ENCODE measurements at regions of chr18 and their contacts with region 1.

Region 1: GRCh38 chr18:21194871-21195771 is 46.9 kb upstream of the GREB1L start:
- DNase-seq: peak in 2 of 5 donors; percentile 7 to 13
- H3K4me3 ChIP-seq: no peak overlapping the region
- H3K4me3 Mint-ChIP-seq: no peak overlapping the region
- H3K27ac ChIP-seq: no peak overlapping the region
- H3K27ac Mint-ChIP-seq: no peak overlapping the region
- H3K4me1 ChIP-seq: no peaks in the 10 kb centered on the region
- H3K4me1 Mint-ChIP-seq: no peaks in the 10 kb centered on the region
- H3K27me3 ChIP-seq: no peaks in the 10 kb centered on the region
- H3K27me3 Mint-ChIP-seq: peaks cover 2 to 26% of the 10 kb centered on the region in 2 donors

Region 2: DNA sequence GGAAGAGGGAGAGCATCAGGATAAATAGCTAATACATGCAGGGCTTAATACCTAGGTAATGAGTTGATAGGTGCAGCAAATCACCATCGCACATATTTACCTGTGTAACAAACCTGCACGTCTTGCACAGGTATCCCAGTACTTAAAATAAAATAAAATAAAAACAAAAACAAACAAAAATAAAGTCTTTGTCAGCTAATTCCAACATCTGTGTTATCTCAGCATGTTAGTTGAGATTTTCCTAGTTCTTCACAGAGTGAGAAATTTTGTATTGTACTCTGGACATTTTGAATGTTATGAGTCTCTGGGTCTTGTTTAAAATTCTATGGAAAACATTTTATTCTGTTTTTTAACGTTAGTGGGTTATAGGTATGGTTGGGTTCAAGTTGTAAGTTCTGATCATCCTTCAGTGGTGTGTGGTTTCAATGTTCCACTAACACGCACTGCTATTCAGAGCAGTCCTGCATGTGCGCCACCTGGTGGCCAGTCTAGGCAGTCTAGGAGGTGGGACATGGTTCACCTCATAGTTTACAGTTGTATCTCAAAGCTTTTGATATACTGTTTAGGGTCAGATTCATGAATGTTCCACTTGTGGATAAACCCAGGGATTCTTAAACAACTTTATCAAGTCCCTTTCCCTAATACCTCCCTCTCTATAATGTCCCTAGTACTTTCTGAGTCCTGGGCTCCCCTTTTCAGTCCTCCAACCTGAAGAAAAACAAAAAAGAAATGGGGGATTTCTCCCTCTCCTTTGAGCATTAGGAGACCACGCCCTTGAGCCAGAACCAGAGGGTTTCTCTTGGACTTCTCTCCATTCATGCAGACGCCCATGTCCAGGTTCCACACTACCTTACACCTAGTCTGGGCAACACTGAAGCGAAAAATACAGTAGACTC is 760.9 kb after region 1 on chr18:
- CTCF ChIA-PET with region 1: interaction called, 12 read pairs
- POLR2A ChIA-PET with region 1: no interaction called
- DNase-seq: peak; percentile 40 to 83 (median 65)
- H3K4me3 ChIP-seq: no peak overlapping the region
- H3K4me3 Mint-ChIP-seq: no peak overlapping the region
- H3K27ac ChIP-seq: no peak overlapping the region
- H3K27ac Mint-ChIP-seq: no peak overlapping the region
- H3K4me1 ChIP-seq: no peaks in the 10 kb centered on the region
- H3K4me1 Mint-ChIP-seq: no peaks in the 10 kb centered on the region
- H3K27me3 ChIP-seq: no peaks in the 10 kb centered on the region
- H3K27me3 Mint-ChIP-seq: peaks cover 20 to 36% of the 10 kb centered on the region in 2 donors

Measured in CD8-positive, alpha-beta memory T cell (primary cell).